Right ventricle myocardium inferior (tissue), 1 donor: ENCODE measurements at regions of chr1 and their contacts with region 1.

Region 1: DNA sequence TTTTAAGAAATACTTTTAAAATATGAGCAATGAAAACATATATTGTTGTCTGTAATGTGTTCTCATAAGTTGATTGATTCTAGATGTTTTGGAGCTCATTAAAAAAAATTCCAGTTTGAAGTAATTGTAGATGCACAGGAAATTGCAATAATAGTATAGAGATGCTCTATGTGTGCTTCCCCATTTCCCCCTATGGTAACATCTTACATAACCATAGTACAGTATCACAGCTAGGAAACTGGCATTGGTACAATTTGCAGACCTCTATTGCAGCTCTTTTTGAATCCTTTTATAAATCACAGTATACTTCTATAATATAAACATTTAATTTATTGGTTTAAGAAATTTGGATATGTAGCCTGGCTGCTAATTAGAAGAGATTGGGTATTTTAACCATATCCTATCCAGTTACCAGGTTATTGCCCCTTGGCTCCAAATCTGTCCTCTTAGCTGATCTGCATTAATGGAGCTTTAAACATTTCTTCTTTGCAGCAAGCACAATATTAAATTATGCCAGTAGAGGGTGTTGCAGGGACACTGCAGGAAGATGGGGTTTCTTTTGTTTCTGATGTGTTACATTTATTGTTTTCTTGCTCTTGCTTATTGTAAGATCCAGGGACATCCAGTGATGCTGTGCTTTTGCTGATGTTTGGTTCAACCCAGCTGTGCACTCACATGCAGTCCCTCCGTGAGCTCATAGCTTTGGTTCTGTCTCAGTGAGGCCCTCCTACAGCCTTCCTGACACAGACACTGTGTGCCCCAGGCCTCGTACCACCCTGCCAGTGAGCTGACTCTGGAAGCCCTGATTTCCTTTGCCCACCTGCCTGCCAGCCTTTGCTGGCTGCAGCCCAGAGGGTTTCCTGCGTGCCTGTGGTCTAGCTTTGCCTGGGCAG is 103.3 kb downstream of the RABGAP1L start:
- DNase-seq: no peak
- ATAC-seq: peak; percentile 60

Region 2: DNA sequence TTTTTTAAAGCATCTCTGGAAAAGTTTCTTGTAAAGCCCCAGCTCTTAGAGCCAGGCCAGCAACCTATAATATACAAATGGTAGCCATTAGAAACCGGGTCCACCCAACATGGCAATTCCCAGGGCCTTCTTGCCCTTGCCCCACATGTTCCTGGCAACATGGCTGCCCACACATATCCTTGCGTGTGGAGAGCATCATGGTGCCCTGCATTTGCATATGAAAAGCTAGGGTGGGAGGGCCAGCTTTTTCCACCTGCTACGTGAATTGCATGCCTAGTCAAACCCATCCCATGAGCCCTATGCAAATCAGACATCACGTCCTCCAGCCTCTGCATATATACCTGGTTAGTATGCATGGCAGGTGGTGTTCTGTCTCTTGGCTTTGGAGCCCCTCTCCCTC is 15.1 kb before region 1 on chr1:
- intact Hi-C with region 1: loop called (anchors 2 kb)
- DNase-seq: no peak
- ATAC-seq: no peak

Region 3: GRCh38 chr1:174276087-174276486 is 13.5 kb after region 1 on chr1:
- intact Hi-C with region 1: no loop called
- DNase-seq: no peak
- ATAC-seq: no peak

Region 4: DNA sequence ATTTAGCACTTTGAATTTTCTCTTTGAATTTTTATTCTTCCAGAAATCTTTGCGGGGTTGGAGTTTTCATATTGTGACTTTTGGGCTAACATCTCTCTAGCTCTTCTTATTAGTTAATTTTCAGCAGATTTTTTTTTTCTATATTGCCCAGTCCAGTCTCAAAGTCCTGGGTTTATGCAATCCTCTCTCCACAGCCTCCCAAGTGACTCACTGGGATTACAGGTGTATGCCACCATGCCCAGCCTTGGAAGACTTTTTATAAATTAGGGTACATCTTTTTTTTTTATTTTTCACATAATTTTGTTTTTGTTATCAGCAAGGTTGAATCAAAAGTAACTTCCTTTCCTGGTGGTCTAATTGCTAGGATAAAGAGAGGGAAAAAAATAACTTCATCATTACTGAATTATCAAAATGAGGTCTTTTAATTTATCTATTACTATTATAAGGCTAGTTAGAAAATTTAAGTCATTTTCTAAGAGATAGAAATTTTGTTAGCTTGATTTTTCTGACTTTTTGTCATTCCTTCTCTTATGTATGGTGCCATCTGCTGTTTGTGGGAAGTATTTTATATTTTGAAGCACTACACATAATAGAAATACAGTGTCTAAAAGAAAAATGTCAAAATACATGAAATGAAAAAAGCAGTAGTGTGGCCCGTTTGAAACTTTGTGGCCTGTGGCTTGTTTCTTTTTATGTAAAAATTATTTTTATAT is 463.7 kb after region 1 on chr1:
- intact Hi-C with region 1: loop called (anchors 5 kb)
- DNase-seq: no peak
- ATAC-seq: no peak

Region 5: GRCh38 chr1:174743654-174744561 is 481.3 kb after region 1 on chr1:
- intact Hi-C with region 1: loop called (anchors 2 kb)
- DNase-seq: no peak
- ATAC-seq: no peak

Region 6: DNA sequence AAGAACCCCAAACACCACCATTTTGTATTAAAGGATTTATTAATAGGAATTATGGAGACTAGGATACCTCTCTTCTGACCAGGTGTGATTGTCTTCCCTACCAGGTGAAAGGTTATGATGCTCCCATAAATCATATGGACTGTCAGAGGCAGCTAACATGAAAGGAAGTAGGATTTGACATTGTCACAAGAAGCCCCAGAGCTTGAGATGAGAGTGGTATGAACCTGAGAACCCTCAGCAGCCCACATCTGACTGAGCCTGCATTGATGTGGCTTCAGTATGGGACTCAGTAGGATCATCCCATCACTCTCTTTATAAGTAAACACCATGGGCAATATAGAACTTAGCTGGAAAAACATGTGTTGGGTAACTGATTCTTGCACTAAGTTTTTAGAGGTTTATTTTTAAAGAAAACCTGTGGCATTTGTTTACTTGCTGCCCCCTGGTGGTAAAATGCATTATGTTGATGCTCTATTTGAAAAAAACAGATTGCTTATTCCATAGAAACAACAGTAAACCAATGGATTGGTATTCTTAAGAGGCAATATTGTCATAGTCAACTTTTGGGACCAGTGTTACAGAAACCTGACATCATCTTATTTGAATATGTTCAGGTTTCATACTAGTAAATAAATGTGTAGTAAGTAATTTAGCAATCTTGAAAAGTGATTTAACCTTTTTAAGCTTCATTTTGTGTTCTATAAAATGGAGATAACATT is 720.5 kb after region 1 on chr1:
- intact Hi-C with region 1: loop called (anchors 10 kb)
- DNase-seq: no peak
- ATAC-seq: no peak

Region 7: DNA sequence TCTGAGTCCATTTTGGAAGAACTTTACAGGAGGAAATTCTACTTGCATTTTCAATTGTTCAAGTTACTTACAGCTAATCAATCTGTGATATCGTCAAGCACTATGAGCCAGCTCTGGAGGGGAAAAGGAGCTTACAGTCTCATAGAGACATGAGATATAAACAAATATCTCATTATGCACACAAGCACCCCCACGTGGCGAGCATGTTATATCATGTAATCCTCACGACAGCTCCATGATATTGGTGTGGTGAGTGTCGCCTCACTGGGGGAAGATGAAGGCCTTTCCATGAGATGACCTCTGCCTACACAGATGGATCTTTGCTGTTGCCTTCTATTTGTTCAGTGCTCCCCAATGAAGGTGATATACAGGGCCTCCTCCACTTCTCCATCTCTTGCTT is 1446.2 kb after region 1 on chr1:
- intact Hi-C with region 1: no loop called
- DNase-seq: no peak
- ATAC-seq: no peak